ENCODE measurements at regions of chr1 and their contacts with region 1.

Region 1: DNA sequence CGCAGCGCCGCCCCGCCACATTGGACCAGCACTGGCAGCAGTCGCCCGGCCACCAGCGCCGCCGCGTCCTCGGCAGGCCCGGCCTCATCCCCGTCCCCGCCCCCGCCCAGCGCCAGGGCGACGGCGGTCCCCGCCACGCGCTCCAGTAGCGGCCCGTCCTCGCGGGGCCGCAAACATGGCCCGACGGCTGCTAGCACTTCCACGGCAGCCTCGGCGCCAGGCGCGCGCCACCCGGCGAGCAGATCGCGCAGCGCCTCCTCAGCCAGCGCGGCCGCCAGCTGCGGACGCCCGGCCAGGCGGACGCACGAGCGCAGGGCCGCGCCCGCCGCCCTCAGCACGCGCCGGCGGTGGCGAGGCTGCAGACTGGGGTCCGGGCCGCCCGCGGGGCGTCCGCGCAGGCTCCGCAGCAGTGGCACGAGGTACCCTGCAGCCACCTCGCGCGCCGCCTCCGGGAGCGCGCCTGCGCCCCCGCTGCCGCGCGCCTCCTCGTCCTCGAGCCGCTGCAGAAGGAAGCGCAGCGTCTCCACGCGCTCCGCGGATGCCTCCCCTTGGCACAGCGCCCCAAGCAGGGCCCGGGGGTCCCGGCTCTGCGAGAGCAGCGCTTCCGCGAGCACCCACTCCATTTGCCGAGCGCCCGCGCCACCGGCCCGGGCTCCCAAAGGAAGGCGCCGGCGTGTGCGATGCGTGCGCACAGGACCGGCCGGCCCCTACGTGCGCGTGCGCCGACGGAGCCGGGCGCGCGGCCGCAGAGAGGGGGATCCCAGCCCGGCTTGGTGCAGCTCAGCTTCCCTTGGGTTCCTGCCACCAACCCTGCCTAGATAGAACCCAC is at the start of gene TARBP1:
- DNase-seq: peak; percentile 73
- H3K4me3 ChIP-seq: peak within 1 kb of the TSS; percentile 73 to 82 (median 78)
- H3K27ac ChIP-seq: no peak within 1 kb of the TSS
- H3K4me1 ChIP-seq: peaks cover 11% of the 10 kb centered on the region
- H3K27me3 ChIP-seq: no peaks in the 10 kb centered on the region
- CTCF ChIP-seq: peak in 1 of 2 donors; percentile 16
- total RNA-seq, gene TARBP1: 16.1 to 18.0 TPM

Region 2: DNA sequence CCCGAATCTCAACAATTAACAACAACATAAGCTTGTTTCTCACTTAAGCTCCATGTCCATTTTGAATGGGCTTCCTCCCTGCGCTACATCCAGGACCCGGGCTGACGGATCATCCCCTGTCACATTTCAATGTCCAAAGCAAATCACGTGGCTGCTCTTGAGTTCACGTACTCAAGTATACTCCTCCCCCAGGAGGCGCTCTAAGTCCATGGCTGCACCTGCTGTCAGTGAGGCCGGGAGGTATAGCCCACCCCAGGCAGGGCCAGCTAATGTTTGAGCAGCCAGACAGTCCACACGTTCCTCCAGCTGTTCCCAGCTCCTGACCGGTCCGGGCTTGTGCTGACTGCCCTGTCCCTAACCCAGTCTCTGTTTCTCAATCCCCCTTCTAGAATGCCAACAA is 353.4 kb before region 1 on chr1:
- CTCF ChIA-PET with region 1: interaction called, 3 read pairs
- dilution Hi-C with region 1: no loop called
- in situ Hi-C with region 1: loop called in 1 of 2 experiments (anchors 10 kb)
- intact Hi-C with region 1: loop called (anchors 5 kb)
- DNase-seq: peak; percentile 55
- H3K4me3 ChIP-seq: no peak overlapping the region
- H3K27ac ChIP-seq: no peak overlapping the region
- H3K4me1 ChIP-seq: peaks cover 7% of the 10 kb centered on the region
- H3K27me3 ChIP-seq: no peaks in the 10 kb centered on the region
- CTCF ChIP-seq: peak; percentile 66 to 79

Region 3: DNA sequence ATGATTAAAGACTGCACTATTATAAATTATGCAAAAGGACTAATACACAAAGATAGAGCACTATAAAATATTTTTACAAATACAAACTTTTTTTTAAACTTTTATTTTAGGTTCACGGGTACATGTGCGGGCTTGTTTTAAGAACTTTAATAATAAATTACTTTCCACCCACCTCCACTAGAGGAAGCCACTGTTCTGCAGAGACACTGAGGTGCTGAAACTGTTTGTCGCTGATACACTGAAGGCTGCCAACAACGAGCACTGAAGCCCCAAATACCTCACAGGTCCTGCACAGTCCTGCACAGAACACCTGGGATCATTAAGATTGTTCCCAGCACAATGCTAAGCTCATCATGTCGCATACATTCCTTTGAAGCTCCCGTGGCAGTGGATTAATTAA is 85.5 kb before region 1 on chr1:
- CTCF ChIA-PET with region 1: no interaction called
- dilution Hi-C with region 1: no loop called
- in situ Hi-C with region 1: no loop called
- intact Hi-C with region 1: loop called (anchors 5 kb)
- DNase-seq: peak; percentile 34
- H3K4me3 ChIP-seq: no peak overlapping the region
- H3K27ac ChIP-seq: peak overlapping the region; percentile 40
- H3K4me1 ChIP-seq: peaks cover 5% of the 10 kb centered on the region
- H3K27me3 ChIP-seq: no peaks in the 10 kb centered on the region
- CTCF ChIP-seq: peak; percentile 24 to 53